ENCODE measurements at regions of chr12 and their contacts with region 1.

Region 1: DNA sequence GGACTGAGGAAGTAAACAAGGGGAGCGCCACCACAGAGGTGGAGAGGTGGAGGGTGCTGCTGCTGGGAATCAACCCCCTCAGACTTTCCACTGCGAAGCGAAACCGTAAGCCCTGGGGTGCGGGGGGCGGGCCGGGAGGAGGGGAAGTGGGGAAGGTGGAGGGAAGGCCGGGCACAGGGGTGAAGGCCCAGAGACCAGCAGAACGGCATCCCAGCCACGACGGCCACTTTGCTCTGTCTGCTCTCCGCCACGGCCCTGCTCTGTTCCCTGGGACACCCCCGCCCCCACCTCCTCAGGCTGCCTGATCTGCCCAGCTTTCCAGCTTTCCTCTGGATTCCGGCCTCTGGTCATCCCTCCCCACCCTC is at the start of gene LAG3:
- DNase-seq: no peak
- ATAC-seq: peak; percentile 49
- H3K4me3 ChIP-seq: no peak within 1 kb of the TSS
- H3K27ac ChIP-seq: no peak within 1 kb of the TSS
- H3K4me1 ChIP-seq: peaks cover 27% of the 10 kb centered on the region
- H3K27me3 ChIP-seq: no peaks in the 10 kb centered on the region
- CTCF ChIP-seq: no peak
- total RNA-seq, gene LAG3: 2.7 TPM

Region 2: DNA sequence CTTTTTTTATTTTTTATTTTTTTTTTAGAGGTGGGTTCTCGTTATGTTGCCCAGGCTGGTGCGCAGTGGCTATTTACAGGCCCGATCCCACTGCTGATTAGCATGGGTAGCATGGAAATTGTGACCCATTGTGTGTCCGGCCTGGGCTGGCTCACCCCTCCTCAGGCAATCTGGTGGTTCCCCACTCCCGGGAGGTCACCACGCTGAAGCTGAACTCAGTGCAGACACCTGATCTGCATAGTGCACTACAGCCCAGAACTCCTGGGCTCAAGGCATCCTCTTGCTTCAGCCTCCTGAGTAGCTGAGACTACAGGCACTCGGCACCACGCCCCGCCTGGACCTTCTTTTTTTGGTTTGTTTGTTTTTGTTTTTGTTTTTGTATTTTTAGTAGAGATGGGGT is 11.5 kb after region 1 on chr12:
- CTCF ChIA-PET with region 1: no interaction called
- POLR2A ChIA-PET with region 1: interaction called, 15 read pairs
- in situ Hi-C with region 1: no loop called
- intact Hi-C with region 1: no loop called
- DNase-seq: no peak
- ATAC-seq: no peak
- H3K4me3 ChIP-seq: no peak overlapping the region
- H3K27ac ChIP-seq: no peak overlapping the region
- H3K4me1 ChIP-seq: no peaks in the 10 kb centered on the region; the same call in 1 of the 2 replicates
- H3K27me3 ChIP-seq: no peaks in the 10 kb centered on the region
- CTCF ChIP-seq: no peak

Region 3: GRCh38 chr12:6810758-6811157 is 38.4 kb after region 1 on chr12:
- CTCF ChIA-PET with region 1: no interaction called
- POLR2A ChIA-PET with region 1: no interaction called
- in situ Hi-C with region 1: no loop called
- intact Hi-C with region 1: no loop called
- DNase-seq: no peak
- ATAC-seq: no peak
- H3K4me3 ChIP-seq: no peak overlapping the region
- H3K27ac ChIP-seq: no peak overlapping the region
- H3K4me1 ChIP-seq: no peaks in the 10 kb centered on the region
- H3K27me3 ChIP-seq: no peaks in the 10 kb centered on the region
- CTCF ChIP-seq: no peak